Esophagus muscularis mucosa (tissue), 4 donors: ENCODE measurements at regions of chr4 and their contacts with region 1.

Region 1: DNA sequence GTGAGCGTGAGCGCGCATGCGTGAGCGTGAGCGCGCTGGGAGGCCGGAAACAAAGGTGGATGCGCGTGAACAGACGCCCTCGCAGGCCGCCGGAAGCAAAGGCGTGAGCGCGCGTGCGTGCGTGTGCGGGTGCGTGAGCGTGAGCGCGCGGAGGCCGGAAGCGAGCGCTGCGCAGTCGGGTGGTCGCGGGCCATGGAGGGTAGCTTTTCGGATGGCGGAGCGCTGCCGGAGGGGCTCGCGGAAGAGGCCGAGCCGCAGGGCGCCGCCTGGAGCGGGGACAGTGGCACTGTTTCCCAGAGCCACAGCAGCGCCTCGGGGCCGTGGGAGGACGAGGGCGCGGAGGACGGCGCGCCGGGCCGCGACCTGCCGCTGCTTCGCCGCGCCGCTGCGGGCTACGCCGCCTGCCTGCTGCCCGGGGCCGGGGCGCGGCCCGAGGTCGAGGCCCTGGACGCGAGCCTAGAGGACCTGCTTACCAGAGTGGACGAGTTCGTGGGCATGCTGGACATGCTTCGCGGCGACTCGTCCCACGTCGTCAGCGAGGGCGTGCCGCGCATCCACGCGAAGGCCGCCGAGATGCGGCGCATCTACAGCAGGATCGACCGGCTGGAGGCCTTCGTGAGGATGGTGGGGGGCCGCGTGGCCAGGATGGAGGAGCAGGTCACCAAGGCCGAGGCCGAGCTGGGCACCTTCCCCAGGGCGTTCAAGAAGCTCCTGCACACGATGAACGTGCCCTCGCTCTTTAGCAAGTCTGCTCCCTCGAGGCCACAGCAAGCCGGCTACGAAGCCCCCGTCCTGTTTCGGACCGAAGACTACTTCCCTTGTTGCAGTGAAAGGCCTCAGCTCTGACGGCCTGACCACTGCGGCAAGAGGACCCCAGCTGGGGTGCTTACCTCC is at the start of gene BLOC1S4:
- DNase-seq: peak; percentile 95
- H3K4me3 ChIP-seq: peak within 1 kb of the TSS; percentile 70 to 97 (median 86)
- H3K27ac ChIP-seq: peak within 1 kb of the TSS; percentile 89 to 97 (median 96)
- H3K4me1 ChIP-seq: peaks cover 26 to 39% (median 34%) of the 10 kb centered on the region in 4 donors
- H3K27me3 ChIP-seq: no peaks in the 10 kb centered on the region
- CTCF ChIP-seq: peak in 2 of 3 experiments; percentile 14 to 19
- EP300 ChIP-seq: no peak
- POLR2A ChIP-seq: peak; percentile 84
- total RNA-seq, gene BLOC1S4: 15.8 to 21.9 (median 17.9) TPM

Region 2: DNA sequence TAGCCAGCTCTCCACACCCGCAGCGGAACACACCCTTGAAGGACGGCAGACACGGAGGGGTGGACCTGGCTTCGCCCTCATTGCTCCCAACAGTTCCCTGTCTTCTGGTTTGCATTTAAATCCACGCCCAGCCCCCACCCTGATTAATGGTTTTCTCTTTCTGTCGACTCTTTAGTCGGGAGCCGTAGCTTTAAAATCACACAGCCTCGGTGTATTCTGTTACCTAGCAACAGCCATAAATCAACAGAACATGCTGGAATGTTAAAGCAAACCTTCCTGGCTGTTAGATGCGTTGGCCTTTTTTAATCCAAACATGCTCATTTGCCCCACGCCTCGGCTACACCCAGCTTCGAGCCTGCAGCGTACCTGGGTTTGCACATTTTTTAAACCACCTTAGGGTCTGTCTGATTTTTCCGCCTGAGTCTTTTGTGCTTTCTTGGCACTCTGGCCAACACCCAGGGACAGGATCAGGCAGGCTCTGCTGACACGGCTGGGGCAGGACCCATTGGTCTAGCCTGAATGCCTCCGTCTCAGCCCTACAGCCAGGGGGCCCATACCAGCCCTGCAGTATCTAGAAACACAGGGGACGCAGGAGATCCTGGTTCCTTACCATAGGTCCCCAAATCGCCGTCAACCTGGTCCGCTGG is 222.5 kb before region 1 on chr4:
- intact Hi-C with region 1: no loop called
- DNase-seq: peak; percentile 87
- H3K4me3 ChIP-seq: peak overlapping the region; percentile 20 to 30 (median 28)
- H3K27ac ChIP-seq: no peak overlapping the region
- H3K4me1 ChIP-seq: peaks cover 0 to 17% (median 14%) of the 10 kb centered on the region in 4 donors
- H3K27me3 ChIP-seq: peaks cover 0 to 17% (median 0%) of the 10 kb centered on the region in 4 donors
- CTCF ChIP-seq: no peak
- EP300 ChIP-seq: no peak
- POLR2A ChIP-seq: no peak

Region 3: GRCh38 chr4:6538575-6538974 is 177.7 kb before region 1 on chr4:
- intact Hi-C with region 1: no loop called
- DNase-seq: no peak
- H3K4me3 ChIP-seq: no peak overlapping the region
- H3K27ac ChIP-seq: no peak overlapping the region
- H3K4me1 ChIP-seq: no peaks in the 10 kb centered on the region
- H3K27me3 ChIP-seq: peaks cover 0 to 66% (median 0%) of the 10 kb centered on the region in 4 donors
- CTCF ChIP-seq: no peak
- EP300 ChIP-seq: no peak
- POLR2A ChIP-seq: no peak

Region 4: GRCh38 chr4:6658597-6659075 is 57.6 kb before region 1 on chr4:
- intact Hi-C with region 1: no loop called
- DNase-seq: no peak
- H3K4me3 ChIP-seq: peak overlapping the region; percentile 52 to 58 (median 56)
- H3K27ac ChIP-seq: peak overlapping the region; percentile 71 to 79 (median 76)
- H3K4me1 ChIP-seq: peaks cover 10 to 18% (median 17%) of the 10 kb centered on the region in 4 donors
- H3K27me3 ChIP-seq: peaks cover 0 to under 1% (median 0%) of the 10 kb centered on the region in 4 donors
- CTCF ChIP-seq: no peak
- EP300 ChIP-seq: no peak
- POLR2A ChIP-seq: no peak

Region 5: GRCh38 chr4:6783053-6783981 is 67.1 kb after region 1 on chr4:
- intact Hi-C with region 1: loop called (anchors 2 kb)
- DNase-seq: peak; percentile 95
- H3K4me3 ChIP-seq: peak overlapping the region; percentile 96 to 100 (median 98)
- H3K27ac ChIP-seq: peak overlapping the region; percentile 100
- H3K4me1 ChIP-seq: peaks cover 34 to 56% (median 55%) of the 10 kb centered on the region in 4 donors
- H3K27me3 ChIP-seq: peaks cover 0 to 5% (median 0%) of the 10 kb centered on the region in 4 donors
- CTCF ChIP-seq: peak in 1 of 3 experiments; percentile 19
- EP300 ChIP-seq: no peak
- POLR2A ChIP-seq: peak; percentile 38

Region 6: GRCh38 chr4:6873792-6874461 is 157.7 kb after region 1 on chr4:
- intact Hi-C with region 1: loop called (anchors 2 kb)
- DNase-seq: no peak
- H3K4me3 ChIP-seq: no peak overlapping the region
- H3K27ac ChIP-seq: no peak overlapping the region
- H3K4me1 ChIP-seq: peaks cover 14 to 39% (median 29%) of the 10 kb centered on the region in 4 donors
- H3K27me3 ChIP-seq: no peaks in the 10 kb centered on the region
- CTCF ChIP-seq: peak; percentile 74 to 86 (median 82)
- EP300 ChIP-seq: no peak
- POLR2A ChIP-seq: no peak

Region 7: DNA sequence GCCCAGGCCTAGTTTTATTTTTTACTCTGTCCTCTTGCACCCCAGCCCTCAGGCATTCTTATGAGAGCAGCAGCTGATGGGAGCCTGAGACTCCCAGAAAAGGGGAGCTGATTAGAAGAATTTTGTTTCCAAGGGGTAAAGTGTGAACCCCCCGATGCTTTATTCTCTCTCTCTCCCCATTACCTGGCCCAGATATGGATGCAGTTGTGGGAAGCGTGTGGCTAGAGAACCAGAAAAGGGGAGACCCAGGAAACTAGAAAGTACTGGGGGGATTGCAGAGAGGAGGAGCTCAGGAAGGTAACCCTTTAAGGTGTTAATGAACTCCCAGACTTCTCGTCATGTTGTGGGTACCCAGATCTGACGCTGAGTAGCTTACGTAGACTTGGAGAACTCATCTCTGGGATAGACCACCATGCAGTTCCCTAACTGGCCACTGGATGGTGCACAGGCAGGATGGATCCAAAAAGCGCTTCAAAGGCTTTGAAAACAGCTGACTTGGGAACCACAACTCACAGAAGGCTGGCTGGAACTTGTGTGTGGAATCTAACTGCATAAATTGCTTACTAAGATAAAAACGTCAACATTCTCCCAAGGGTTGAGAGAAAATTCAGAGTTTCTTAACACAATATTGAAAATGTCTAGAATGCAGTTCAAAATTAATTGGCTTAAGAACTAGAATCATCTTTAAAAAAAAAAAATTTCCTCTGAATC is 258.0 kb after region 1 on chr4:
- intact Hi-C with region 1: loop called (anchors 5 kb)
- DNase-seq: peak; percentile 95
- H3K4me3 ChIP-seq: no peak overlapping the region
- H3K27ac ChIP-seq: no peak overlapping the region
- H3K4me1 ChIP-seq: peaks cover 0 to 15% (median 11%) of the 10 kb centered on the region in 4 donors
- H3K27me3 ChIP-seq: no peaks in the 10 kb centered on the region
- CTCF ChIP-seq: peak; percentile 96 to 99 (median 98)
- EP300 ChIP-seq: no peak
- POLR2A ChIP-seq: no peak

Region 8: GRCh38 chr4:6986781-6987587 is 270.7 kb after region 1 on chr4:
- intact Hi-C with region 1: loop called (anchors 5 kb)
- DNase-seq: peak; percentile 98
- H3K4me3 ChIP-seq: peak overlapping the region; percentile 72 to 90 (median 89)
- H3K27ac ChIP-seq: peak overlapping the region; percentile 89 to 97 (median 94)
- H3K4me1 ChIP-seq: peaks cover 45 to 71% (median 66%) of the 10 kb centered on the region in 4 donors
- H3K27me3 ChIP-seq: no peaks in the 10 kb centered on the region
- CTCF ChIP-seq: peak in 1 of 3 experiments; percentile 5
- EP300 ChIP-seq: no peak
- POLR2A ChIP-seq: peak; percentile 55

Region 9: GRCh38 chr4:7042697-7043464 is 326.6 kb after region 1 on chr4 and contains the start of gene TADA2B:
- intact Hi-C with region 1: loop called (anchors 10 kb)
- DNase-seq: peak; percentile 99
- H3K4me3 ChIP-seq: peak within 1 kb of the TSS; percentile 95 to 100 (median 98)
- H3K27ac ChIP-seq: peak within 1 kb of the TSS; percentile 90 to 94 (median 92)
- H3K4me1 ChIP-seq: peaks cover 41 to 55% (median 50%) of the 10 kb centered on the region in 4 donors
- H3K27me3 ChIP-seq: no peaks in the 10 kb centered on the region
- CTCF ChIP-seq: peak; percentile 37 to 72 (median 50)
- EP300 ChIP-seq: no peak
- POLR2A ChIP-seq: no peak
- total RNA-seq, gene TADA2B: 19.9 to 31.7 (median 26.3) TPM

Region 10: GRCh38 chr4:7067452-7068278 is 351.4 kb after region 1 on chr4 and contains the start of gene GRPEL1:
- intact Hi-C with region 1: loop called (anchors 5 kb)
- DNase-seq: peak; percentile 100
- H3K4me3 ChIP-seq: peak within 1 kb of the TSS; percentile 78 to 92 (median 85)
- H3K27ac ChIP-seq: peak within 1 kb of the TSS; percentile 90 to 95 (median 92)
- H3K4me1 ChIP-seq: peaks cover 17 to 49% (median 43%) of the 10 kb centered on the region in 4 donors
- H3K27me3 ChIP-seq: no peaks in the 10 kb centered on the region
- CTCF ChIP-seq: peak in 1 of 3 experiments; percentile 4
- EP300 ChIP-seq: no peak
- POLR2A ChIP-seq: peak; percentile 97
- total RNA-seq, gene GRPEL1: 17.0 to 34.2 (median 27.5) TPM